HCT116 (cell line): ENCODE measurements at regions of chr20 and their contacts with region 1.

Region 1: GRCh38 chr20:35619196-35620095 is 3.8 kb downstream of the SPAG4 start:
- DNase-seq: peak; percentile 76
- ATAC-seq: peak; percentile 71
- H3K4me3 ChIP-seq: peak overlapping the region; percentile 63 to 70
- H3K27ac ChIP-seq: peak overlapping the region; percentile 23
- H3K4me1 ChIP-seq: peaks cover 19 to 42% of the 10 kb centered on the region in 2 experiments
- H3K27me3 ChIP-seq: no peaks in the 10 kb centered on the region
- CTCF ChIP-seq: peak in 2 of 3 experiments; percentile 67; a peak in 4 of 6 replicates
- POLR2A ChIP-seq: no peak
- RAD21 ChIP-seq: no peak

Region 2: GRCh38 chr20:35541783-35542588 is 77.5 kb before region 1 on chr20 and contains the start of gene ERGIC3:
- CTCF ChIA-PET with region 1: interaction called, 6 read pairs
- POLR2A ChIA-PET with region 1: no interaction called
- RAD21 ChIA-PET with region 1: no interaction called
- intact Hi-C with region 1: loop called (anchors 5 kb)
- DNase-seq: peak; percentile 86
- ATAC-seq: peak; percentile 96
- H3K4me3 ChIP-seq: peak within 1 kb of the TSS; percentile 94
- H3K27ac ChIP-seq: peak within 1 kb of the TSS; percentile 85
- H3K4me1 ChIP-seq: peaks cover 9 to 26% of the 10 kb centered on the region in 2 experiments
- H3K27me3 ChIP-seq: no peaks in the 10 kb centered on the region
- CTCF ChIP-seq: no peak
- POLR2A ChIP-seq: peak; percentile 81
- RAD21 ChIP-seq: no peak
- total RNA-seq, gene ERGIC3: 229 TPM

Region 3: DNA sequence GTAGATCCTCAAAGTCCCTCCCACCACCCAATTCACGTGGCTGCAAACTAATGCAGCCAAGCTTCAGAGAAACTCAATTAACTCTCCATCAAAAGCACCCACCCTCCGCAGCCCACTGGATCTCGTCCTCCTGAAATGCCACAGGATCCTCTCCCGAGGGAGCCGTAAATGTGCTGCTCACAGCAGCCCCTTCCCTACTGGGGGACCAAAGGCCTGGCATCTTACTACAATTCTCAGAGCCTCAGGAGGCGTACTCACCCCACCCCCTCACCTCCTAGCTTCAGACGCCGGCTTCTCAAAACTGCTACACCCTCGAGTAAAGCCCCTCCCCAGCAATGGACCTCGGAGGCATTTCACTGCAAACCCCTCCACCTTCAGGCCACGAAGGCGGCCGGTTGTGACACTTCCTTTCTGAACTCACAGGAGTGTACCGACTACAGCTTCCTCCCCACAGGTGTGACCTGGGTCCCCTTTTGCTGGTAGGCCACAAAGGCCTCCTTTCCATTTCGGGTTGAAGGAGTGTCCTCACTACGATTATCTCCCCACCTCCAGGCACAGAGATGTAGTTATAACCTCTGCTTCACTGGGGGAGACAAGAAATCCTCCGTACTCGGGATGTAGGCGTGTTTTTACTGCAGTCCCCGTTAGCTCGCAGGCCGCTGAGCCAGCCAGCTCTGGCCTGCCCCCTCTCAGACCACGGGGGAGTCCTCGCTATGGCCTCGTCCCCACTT is 44.5 kb after region 1 on chr20:
- CTCF ChIA-PET with region 1: no interaction called
- POLR2A ChIA-PET with region 1: interaction called, 3 read pairs
- RAD21 ChIA-PET with region 1: no interaction called
- intact Hi-C with region 1: loop called (anchors 2 kb)
- DNase-seq: peak; percentile 6
- ATAC-seq: peak; percentile 61
- H3K4me3 ChIP-seq: peak overlapping the region; percentile 79 to 87
- H3K27ac ChIP-seq: peak overlapping the region; percentile 88
- H3K4me1 ChIP-seq: peaks cover 31 to 43% of the 10 kb centered on the region in 2 experiments
- H3K27me3 ChIP-seq: no peaks in the 10 kb centered on the region
- CTCF ChIP-seq: no peak
- POLR2A ChIP-seq: no peak
- RAD21 ChIP-seq: no peak

Region 4: GRCh38 chr20:35791821-35792220 is 172.4 kb after region 1 on chr20:
- CTCF ChIA-PET with region 1: no interaction called
- POLR2A ChIA-PET with region 1: no interaction called
- RAD21 ChIA-PET with region 1: no interaction called
- intact Hi-C with region 1: no loop called
- DNase-seq: no peak
- ATAC-seq: no peak
- H3K4me3 ChIP-seq: no peak overlapping the region
- H3K27ac ChIP-seq: no peak overlapping the region
- H3K4me1 ChIP-seq: no peaks in the 10 kb centered on the region
- H3K27me3 ChIP-seq: no peaks in the 10 kb centered on the region
- CTCF ChIP-seq: no peak
- POLR2A ChIP-seq: no peak
- RAD21 ChIP-seq: no peak